Activated CD4-positive, alpha-beta memory T cell treated with anti-CD3 and anti-CD28 coated beads for 36 hours (primary cell): ENCODE measurements at regions of chr14 and their contacts with region 1.

Region 1: DNA sequence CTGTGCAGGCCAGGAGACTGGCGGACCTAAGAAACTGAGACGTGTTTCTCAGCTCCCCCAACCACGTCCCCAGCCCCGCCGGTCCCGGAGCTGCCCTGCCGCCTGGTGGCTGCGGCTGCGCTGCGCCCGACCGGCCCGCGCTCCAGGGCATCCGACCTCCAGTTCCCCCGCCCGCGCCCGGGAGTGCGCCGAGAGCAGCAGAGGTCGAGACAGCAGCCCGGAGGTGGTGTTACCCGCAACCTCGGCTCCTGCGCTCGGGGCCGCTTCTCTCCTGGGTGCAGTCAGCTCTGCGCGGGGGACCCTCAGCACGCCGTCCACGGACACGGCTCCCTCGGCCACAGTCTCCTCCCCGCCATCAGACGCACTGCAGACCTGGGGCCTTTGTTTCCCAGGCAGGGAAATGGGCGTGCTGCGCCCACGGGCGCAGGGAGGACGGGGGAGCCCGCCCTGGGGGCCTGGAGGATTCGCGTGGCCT is 21.6 kb upstream of the GPR132 start:
- DNase-seq: peak; percentile 93
- H3K4me3 Mint-ChIP-seq: peak overlapping the region; percentile 74
- H3K27ac Mint-ChIP-seq: peak overlapping the region; percentile 65
- H3K4me1 Mint-ChIP-seq: peaks cover 13% of the 10 kb centered on the region
- H3K27me3 Mint-ChIP-seq: no peaks in the 10 kb centered on the region

Region 2: DNA sequence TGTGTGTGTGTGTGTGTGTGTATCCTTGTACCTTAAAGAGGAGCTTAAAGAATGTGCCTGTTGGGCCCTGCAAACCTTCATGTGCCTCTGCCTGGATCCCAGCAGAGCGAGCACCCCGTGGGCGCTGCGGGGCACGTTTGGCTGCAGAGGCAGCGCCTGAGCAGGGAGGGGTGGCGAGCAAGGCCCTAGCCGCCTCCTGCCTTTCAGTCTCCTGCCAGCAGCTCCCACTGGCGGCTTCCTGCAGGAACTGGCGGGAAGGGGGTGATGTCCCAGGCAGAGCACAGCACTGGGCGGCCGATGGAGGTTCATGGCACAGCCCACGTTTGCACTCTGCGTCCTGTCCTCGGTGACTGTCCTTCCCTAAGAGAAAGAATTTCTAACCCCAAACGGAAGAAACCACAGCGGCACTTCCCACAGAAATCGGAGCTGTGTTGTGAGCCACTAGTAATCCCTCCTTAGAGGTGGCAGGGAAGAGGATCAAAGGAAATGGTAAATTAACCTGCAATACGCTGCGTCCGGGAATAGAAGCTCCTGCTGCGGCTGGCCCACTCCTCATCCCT is 266.1 kb before region 1 on chr14:
- CTCF ChIA-PET with region 1: no interaction called
- POLR2A ChIA-PET with region 1: no interaction called
- intact Hi-C with region 1: no loop called
- DNase-seq: no peak
- H3K4me3 Mint-ChIP-seq: no peak overlapping the region
- H3K27ac Mint-ChIP-seq: no peak overlapping the region
- H3K4me1 Mint-ChIP-seq: peaks cover 11% of the 10 kb centered on the region
- H3K27me3 Mint-ChIP-seq: peaks cover 5% of the 10 kb centered on the region

Region 3: DNA sequence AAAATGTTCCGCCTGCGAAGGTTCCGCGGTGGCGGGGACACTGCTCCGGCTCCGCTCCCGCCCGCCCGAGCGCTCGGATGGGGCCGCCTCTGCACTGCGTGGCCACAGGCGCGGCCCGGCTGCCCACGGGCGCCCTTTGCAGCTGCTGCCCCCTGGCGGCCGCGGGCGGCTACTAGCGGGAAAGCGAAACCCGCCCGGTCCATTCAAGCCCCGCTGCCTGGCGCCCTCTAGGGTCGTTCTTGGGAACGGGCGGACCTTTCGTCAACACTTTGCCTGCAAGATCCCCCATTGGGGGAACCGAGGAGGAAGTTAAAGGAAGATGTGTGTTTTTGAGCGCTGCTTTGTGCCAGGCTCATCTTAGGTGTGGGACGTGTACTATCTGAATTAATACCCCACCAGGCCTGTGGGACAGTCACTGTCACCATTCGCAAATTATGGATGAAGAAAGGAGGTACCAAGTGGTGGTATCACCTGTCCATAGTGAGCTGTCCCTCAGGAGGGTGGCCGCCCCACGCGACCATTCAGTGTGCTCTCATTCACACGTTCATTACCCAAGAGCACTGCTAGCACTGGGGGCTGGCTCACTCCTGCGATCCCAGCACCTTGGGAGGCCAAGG is 41.1 kb before region 1 on chr14:
- CTCF ChIA-PET with region 1: interaction called, 28 read pairs
- POLR2A ChIA-PET with region 1: no interaction called
- intact Hi-C with region 1: loop called (anchors 1 kb)
- DNase-seq: peak; percentile 94
- H3K4me3 Mint-ChIP-seq: no peak overlapping the region
- H3K27ac Mint-ChIP-seq: peak overlapping the region; percentile 23
- H3K4me1 Mint-ChIP-seq: peaks cover 15% of the 10 kb centered on the region
- H3K27me3 Mint-ChIP-seq: peaks cover 9% of the 10 kb centered on the region

Region 4: GRCh38 chr14:105065280-105066228 is 21.3 kb before region 1 on chr14 and contains the start of gene GPR132:
- CTCF ChIA-PET with region 1: interaction called, 179 read pairs
- POLR2A ChIA-PET with region 1: interaction called, 13 read pairs
- intact Hi-C with region 1: loop called (anchors 2 kb)
- DNase-seq: peak; percentile 95
- H3K4me3 Mint-ChIP-seq: peak within 1 kb of the TSS; percentile 94
- H3K27ac Mint-ChIP-seq: peak within 1 kb of the TSS; percentile 86
- H3K4me1 Mint-ChIP-seq: peaks cover 70% of the 10 kb centered on the region
- H3K27me3 Mint-ChIP-seq: no peaks in the 10 kb centered on the region
- total RNA-seq, gene GPR132: 33.4 to 34.2 TPM

Region 5: DNA sequence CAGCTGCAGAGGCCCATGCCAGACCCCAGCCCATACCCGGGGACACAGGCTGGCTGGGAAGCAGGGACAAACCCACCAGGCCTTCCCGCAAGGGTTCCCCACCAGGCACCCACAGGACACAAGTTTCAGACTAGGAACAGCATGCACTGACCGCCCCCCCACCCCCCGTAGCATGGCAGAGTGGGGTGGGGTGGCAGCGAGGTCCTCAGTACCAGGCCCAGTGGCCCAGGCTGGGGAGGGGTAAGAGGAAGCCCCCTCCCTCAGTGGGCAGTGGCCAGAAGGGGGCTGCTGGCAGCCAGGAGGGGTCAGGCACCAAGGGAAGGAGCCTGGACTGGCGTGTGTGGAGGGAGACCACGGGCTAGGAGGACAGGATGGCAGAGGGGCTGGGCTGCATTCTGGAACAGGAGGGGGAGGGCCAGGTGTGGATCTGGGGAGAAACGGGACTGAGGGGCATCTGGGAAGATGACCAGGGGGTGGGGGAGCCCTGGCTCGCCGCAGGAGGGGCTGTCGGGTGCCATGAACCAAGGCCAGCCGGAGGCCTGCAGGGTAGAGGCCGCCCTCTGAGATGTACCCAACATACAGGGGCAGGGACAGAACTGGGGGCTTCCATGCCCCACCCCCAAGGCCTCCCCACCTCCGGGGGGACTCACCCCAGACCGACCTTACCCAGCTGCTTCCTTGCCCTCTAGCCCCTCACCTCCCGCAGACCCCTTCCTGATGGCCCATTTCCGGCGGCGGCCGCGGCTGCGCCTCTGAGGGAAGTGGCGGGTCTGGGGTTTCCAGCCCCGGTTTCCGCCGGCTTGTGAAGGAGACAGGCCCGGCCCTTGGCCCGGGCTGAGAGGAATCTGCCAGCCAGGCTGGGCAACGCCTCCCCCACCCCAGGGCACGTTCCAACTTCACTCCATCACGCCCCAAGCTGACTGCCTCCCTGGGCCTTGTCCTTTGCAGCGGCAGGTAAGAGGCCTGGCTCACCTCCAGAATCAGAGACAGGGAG is 87.3 kb after region 1 on chr14:
- CTCF ChIA-PET with region 1: interaction called, 9 read pairs
- POLR2A ChIA-PET with region 1: no interaction called
- intact Hi-C with region 1: loop called (anchors 5 kb)
- DNase-seq: peak; percentile 63
- H3K4me3 Mint-ChIP-seq: no peak overlapping the region
- H3K27ac Mint-ChIP-seq: no peak overlapping the region
- H3K4me1 Mint-ChIP-seq: peaks cover 26% of the 10 kb centered on the region
- H3K27me3 Mint-ChIP-seq: peaks cover 6% of the 10 kb centered on the region

Region 6: DNA sequence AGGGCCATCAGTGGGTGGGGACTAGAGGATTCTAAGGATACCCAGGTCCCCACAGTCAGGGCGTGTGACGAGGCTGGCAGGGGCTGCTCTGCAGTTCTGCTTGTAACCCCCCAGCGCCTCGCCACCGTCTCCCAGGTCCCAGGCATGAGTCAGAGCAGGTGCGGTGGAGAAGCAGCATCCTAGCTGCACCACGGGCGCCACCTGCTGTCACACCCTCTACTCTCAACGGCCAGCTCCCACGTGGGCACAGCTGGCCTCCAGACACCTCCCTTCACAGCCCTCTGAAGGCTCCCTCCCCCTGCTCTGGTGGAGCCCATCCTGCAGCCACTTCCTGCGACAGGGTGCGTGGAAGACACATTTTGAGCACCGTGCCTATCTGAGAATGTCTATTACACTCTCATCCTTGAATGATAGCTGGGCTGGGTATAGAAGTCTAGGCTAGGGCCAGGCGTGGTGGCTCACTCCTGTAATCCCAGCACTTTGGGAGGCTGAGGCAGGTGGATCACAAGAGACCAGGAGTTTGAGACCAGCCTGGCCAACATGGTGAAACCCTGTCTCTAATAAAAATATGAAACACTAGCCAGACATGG is 101.2 kb after region 1 on chr14:
- CTCF ChIA-PET with region 1: interaction called, 5 read pairs
- POLR2A ChIA-PET with region 1: no interaction called
- intact Hi-C with region 1: loop called (anchors 1 kb)
- DNase-seq: peak; percentile 53
- H3K4me3 Mint-ChIP-seq: no peak overlapping the region
- H3K27ac Mint-ChIP-seq: no peak overlapping the region
- H3K4me1 Mint-ChIP-seq: peaks cover under 1% of the 10 kb centered on the region
- H3K27me3 Mint-ChIP-seq: peaks cover 8% of the 10 kb centered on the region

Region 7: DNA sequence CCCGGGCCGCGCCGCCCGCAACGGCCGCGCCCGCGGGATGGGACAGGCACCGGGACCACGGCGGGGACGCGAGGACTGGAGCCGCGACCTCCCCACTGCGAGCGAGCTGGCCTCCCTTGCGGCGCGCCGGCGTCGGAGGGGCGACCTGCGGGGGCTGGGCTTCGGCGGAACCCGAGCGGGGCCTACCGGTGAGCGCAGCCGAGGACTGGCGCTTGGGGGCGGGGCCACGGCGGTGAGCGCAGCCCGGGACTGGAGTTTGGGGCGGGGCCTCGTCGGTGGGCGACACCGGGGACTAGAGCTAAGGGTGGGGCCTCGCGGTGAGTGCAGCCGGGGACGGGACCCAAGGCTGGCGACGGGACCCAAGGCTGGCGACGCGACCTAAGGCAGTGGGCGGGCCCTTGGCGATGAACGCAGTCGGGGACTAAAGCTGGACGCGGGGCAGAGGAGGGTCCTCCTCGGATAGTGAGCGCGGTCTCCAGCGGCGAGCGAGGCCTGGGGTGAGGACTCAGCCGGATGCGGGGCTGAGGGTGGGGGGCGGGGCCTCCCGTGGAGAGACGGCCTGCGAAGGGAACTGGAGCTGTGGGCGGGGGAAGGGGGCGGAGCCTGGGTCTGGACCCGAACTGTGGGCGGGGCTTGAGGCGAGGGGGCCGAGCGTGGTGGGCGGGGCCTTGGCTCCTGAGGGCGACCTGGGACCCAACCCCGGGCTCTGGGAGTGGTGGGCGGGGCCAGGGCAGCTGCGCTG is 214.1 kb after region 1 on chr14 and contains the start of gene BRF1:
- CTCF ChIA-PET with region 1: interaction called, 7 read pairs
- POLR2A ChIA-PET with region 1: no interaction called
- intact Hi-C with region 1: loop called (anchors 5 kb)
- DNase-seq: peak; percentile 99
- H3K4me3 Mint-ChIP-seq: peak within 1 kb of the TSS; percentile 84
- H3K27ac Mint-ChIP-seq: peak within 1 kb of the TSS; percentile 93
- H3K4me1 Mint-ChIP-seq: peaks cover 27% of the 10 kb centered on the region
- H3K27me3 Mint-ChIP-seq: no peaks in the 10 kb centered on the region
- total RNA-seq, gene BRF1: 25.5 to 27.4 TPM